Right ventricle myocardium inferior (tissue), 1 donor: ENCODE measurements at regions of chr3 and their contacts with region 1.

Region 1: GRCh38 chr3:193997228-193998122 is 138.5 kb upstream of the HES1 start:
- DNase-seq: peak; percentile 73
- ATAC-seq: peak; percentile 84

Region 2: GRCh38 chr3:193863657-193864357 is 133.7 kb before region 1 on chr3:
- intact Hi-C with region 1: loop called (anchors 5 kb)
- DNase-seq: peak; percentile 68
- ATAC-seq: peak; percentile 84

Region 3: GRCh38 chr3:194323785-194324735 is 326.6 kb after region 1 on chr3:
- intact Hi-C with region 1: loop called (anchors 5 kb)
- DNase-seq: peak; percentile 88
- ATAC-seq: peak; percentile 89